Left ventricle myocardium superior (tissue), 1 donor: ENCODE measurements at regions of chr12 and their contacts with region 1.

Region 1: GRCh38 chr12:100142851-100143559 is at the start of gene BLTP3B:
- DNase-seq: peak; percentile 96
- ATAC-seq: peak; percentile 99
- total RNA-seq, gene BLTP3B: 12.0 TPM

Region 2: GRCh38 chr12:100229058-100229637 is 86.1 kb after region 1 on chr12:
- intact Hi-C with region 1: loop called (anchors 10 kb)
- DNase-seq: no peak
- ATAC-seq: no peak

Region 3: GRCh38 chr12:100251917-100252316 is 108.9 kb after region 1 on chr12:
- intact Hi-C with region 1: no loop called
- DNase-seq: no peak
- ATAC-seq: no peak

Region 4: GRCh38 chr12:100484178-100484886 is 341.3 kb after region 1 on chr12:
- intact Hi-C with region 1: no loop called
- DNase-seq: no peak
- ATAC-seq: no peak